PC-9 (cell line): ENCODE measurements at regions of chr1 and their contacts with region 1.

Region 1: DNA sequence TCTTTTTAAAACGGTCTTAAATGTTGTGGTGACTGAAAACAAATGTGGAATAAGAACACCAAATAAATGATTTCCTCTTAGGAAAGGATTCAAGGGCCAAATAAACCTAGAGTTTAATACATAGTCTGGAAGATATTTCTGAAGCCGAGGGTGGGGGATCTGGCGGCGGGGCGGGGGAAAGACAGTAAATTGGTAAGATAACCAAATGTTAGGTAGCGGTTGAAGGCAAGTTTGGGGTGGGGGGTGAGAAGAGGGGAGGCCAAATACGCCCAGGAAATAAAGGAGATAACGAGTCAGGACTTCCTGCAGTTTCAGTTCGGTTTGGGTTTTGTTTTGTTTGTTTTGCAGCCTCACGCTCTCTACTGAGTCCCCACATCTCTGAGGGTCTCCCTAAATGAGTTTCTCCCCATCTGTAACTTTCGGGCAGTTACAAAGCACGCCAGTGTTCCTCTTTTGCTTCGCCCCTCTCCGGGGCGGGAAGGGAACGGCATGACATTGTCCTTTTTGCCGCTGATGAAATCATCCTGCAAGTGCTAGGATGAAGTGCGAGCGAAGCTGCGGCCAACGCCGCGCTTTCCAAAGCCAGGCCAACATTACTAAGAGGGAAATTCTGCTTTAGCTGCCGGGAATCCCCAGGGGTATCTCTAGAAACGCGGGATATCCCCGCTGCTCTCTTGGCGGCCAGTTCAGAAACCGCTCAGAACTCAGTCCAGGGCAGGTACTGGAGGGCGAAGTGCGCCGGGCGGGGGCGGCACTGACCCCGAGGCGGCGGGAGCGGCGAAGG is 844 bp downstream of the NIBAN1 start:
- DNase-seq: peak in 1 of 2 experiments; percentile 38
- H3K4me3 ChIP-seq: peak overlapping the region; percentile 92
- H3K27ac ChIP-seq: peak overlapping the region; percentile 52
- H3K4me1 ChIP-seq: peaks cover 20% of the 10 kb centered on the region
- H3K27me3 ChIP-seq: no peaks in the 10 kb centered on the region
- CTCF ChIP-seq: no peak

Region 2: DNA sequence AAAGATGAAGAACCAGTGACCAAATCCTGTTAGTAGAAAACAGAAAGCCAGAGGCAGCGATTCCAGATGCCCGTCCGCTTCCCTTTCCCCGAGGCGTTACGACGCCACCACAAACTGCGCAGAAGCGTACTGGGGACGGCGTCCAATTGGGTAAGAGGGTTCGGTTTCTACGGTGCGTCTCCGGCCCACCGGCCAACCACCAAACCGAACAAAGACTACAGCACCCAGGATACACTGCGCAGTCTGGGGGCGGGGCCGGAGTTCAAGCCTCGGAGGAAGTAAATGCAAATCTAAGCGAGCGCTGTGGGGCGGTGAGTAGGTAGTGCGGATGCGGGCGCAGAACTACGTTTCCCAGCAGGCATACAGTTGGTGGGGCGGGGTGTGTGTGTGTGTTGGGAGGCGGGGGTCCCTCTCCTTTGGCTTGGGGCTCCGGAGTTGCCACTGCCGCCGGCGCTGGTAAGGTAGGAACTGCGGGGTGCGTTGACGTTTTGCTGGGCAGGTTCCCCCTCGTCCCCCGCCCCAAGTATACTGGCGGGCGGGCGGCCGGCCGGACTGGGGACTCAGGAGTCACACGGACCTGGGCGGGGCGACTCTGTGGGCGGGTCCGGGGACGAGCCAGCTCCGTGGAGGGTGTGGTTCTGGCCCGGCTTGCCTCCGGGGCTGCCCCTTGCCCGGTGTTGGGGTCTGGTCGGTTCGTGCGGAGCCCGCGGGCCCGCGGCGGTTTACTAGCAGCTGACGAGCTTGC is 183.6 kb after region 1 on chr1 and contains the starts of genes SWT1 and TRMT1L:
- CTCF ChIA-PET with region 1: no interaction called
- POLR2A ChIA-PET with region 1: no interaction called
- intact Hi-C with region 1: loop called (anchors 5 kb)
- DNase-seq: peak; percentile 95 to 98
- H3K4me3 ChIP-seq: peak within 1 kb of the TSS; percentile 82
- H3K27ac ChIP-seq: peak within 1 kb of the TSS; percentile 55
- H3K4me1 ChIP-seq: peaks cover 21% of the 10 kb centered on the region
- H3K27me3 ChIP-seq: no peaks in the 10 kb centered on the region
- CTCF ChIP-seq: no peak
- total RNA-seq, gene SWT1: 2.9 and 3.6 TPM in 2 replicates
- total RNA-seq, gene TRMT1L: 16.9 and 18.3 TPM in 2 replicates